Thyroid gland (tissue), 4 donors: ENCODE measurements at regions of chr2 and their contacts with region 1.

Region 1: DNA sequence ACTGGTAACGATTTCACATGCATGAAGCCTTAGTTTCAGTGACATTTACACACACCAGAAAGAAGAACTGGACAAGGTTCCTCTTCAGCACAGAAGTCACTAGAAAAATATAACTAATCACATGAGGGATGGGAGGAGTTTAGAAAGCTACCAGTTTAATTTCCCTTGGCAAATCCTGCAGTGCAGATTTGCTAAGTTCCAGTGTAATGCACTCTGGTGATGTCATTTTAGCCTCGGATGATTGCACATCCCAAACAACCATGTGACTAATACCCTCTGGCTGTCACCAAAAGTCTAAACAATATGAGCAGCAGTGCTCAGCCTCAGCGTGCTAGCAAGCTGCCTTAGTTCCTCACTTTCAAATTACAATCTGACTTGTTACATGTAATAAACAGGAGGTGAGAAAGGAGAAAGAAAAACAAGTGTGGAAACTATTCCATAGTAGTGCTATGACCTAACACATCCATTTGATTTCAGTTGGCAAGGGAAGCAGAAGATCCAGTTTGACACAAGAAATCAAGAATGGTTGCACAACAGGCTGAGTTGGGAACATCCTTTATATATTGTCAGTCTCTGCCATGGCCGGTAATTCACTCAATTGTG is 35.3 kb upstream of the PPP1CB start:
- DNase-seq: peak; percentile 61 to 67
- H3K4me3 ChIP-seq: no peak overlapping the region
- H3K27ac ChIP-seq: peak overlapping the region; percentile 87 to 98 (median 98)
- H3K4me1 ChIP-seq: peaks cover 20 to 33% of the 10 kb centered on the region in 2 donors
- H3K27me3 ChIP-seq: no peaks in the 10 kb centered on the region
- CTCF ChIP-seq: no peak
- POLR2A ChIP-seq: peak in 1 of 2 donors; percentile 74

Region 2: GRCh38 chr2:28661589-28662001 is 54.8 kb before region 1 on chr2:
- intact Hi-C with region 1: loop called (anchors 10 kb)
- DNase-seq: peak; percentile 81 to 87
- H3K4me3 ChIP-seq: no peak overlapping the region
- H3K27ac ChIP-seq: peak overlapping the region; percentile 71 to 80 (median 71)
- H3K4me1 ChIP-seq: peaks cover 28 to 48% of the 10 kb centered on the region in 2 donors
- H3K27me3 ChIP-seq: no peaks in the 10 kb centered on the region
- CTCF ChIP-seq: no peak
- POLR2A ChIP-seq: no peak